Activated CD4-positive, alpha-beta T cell treated with anti-CD3 and anti-CD28 coated beads, Interleukin-2, amount 10 ng/mL, durations not matched to agents 7 days and 5 days (primary cell): ENCODE measurements at regions of chr1 and their contacts with region 1.

Region 1: GRCh38 chr1:110053557-110054428 is 16.7 kb downstream of the ALX3 start:
- DNase-seq: peak; percentile 72
- H3K4me3 Mint-ChIP-seq: no peak overlapping the region
- H3K27ac Mint-ChIP-seq: no peak overlapping the region
- H3K4me1 Mint-ChIP-seq: no peaks in the 10 kb centered on the region
- H3K27me3 Mint-ChIP-seq: no peaks in the 10 kb centered on the region

Region 2: GRCh38 chr1:109975718-109976117 is 78.1 kb before region 1 on chr1:
- CTCF ChIA-PET with region 1: no interaction called
- POLR2A ChIA-PET with region 1: no interaction called
- DNase-seq: no peak
- H3K4me3 Mint-ChIP-seq: no peak overlapping the region
- H3K27ac Mint-ChIP-seq: no peak overlapping the region
- H3K4me1 Mint-ChIP-seq: no peaks in the 10 kb centered on the region
- H3K27me3 Mint-ChIP-seq: peaks cover 22% of the 10 kb centered on the region

Region 3: GRCh38 chr1:110034451-110035235 is 19.1 kb before region 1 on chr1 and contains the start of gene STRIP1:
- CTCF ChIA-PET with region 1: interaction called, 23 read pairs
- POLR2A ChIA-PET with region 1: no interaction called
- DNase-seq: peak; percentile 96
- H3K4me3 Mint-ChIP-seq: peak within 1 kb of the TSS; percentile 91
- H3K27ac Mint-ChIP-seq: peak within 1 kb of the TSS; percentile 93
- H3K4me1 Mint-ChIP-seq: peaks cover 65% of the 10 kb centered on the region
- H3K27me3 Mint-ChIP-seq: no peaks in the 10 kb centered on the region
- total RNA-seq, gene STRIP1: 33.4 to 35.9 TPM

Region 4: GRCh38 chr1:110065841-110066240 is 12.0 kb after region 1 on chr1:
- CTCF ChIA-PET with region 1: interaction called, 16 read pairs
- POLR2A ChIA-PET with region 1: no interaction called
- DNase-seq: no peak
- H3K4me3 Mint-ChIP-seq: no peak overlapping the region
- H3K27ac Mint-ChIP-seq: no peak overlapping the region
- H3K4me1 Mint-ChIP-seq: peaks cover 5% of the 10 kb centered on the region
- H3K27me3 Mint-ChIP-seq: peaks cover 42% of the 10 kb centered on the region

Region 5: DNA sequence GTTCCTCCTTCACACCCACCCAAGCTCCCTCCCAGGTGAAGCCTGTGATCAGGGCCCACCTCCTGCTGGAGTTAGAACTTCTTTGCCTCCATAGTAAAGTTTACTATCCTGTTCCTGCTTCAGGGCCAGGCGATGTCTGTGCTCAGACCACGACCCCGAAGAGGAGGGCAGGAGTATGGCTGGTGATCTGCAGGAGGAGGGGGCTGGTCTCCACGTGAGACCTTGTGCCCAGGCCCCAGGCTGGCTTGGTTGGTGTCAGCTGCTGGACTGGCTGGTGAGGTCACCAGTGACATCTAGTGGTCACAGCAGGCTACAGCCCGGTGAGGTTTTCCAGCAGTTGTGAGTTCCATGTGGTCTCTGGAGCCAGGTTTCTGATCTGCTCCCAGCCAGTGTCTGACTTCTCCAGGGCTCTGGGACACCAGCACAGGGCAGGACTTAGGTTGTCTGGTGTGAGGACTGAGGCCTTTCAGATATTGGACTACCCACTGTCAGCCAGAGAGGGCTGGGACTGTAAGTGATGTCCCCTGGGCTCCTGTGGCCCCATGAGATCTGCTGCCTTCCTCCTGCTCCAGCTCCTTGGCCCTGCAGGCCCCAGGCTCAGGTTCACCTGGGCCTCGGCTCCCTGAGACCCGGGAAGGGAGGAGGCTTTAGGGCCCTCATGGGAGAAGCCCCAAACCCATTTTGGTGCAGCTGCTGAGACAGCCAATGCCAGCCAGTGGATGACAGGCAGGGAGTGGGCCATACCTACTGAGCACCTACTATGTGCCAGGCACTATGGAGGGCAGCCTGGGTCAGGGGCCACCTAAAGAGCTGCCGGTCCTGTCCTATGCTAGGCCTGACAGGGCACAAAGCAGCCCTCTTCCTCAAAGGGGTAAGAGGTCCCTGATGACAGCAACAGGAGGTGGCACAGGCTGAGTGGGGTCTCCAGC is 52.5 kb after region 1 on chr1:
- CTCF ChIA-PET with region 1: interaction called, 11 read pairs
- POLR2A ChIA-PET with region 1: no interaction called
- DNase-seq: peak; percentile 62
- H3K4me3 Mint-ChIP-seq: no peak overlapping the region
- H3K27ac Mint-ChIP-seq: no peak overlapping the region
- H3K4me1 Mint-ChIP-seq: no peaks in the 10 kb centered on the region
- H3K27me3 Mint-ChIP-seq: peaks cover 8% of the 10 kb centered on the region